ENCODE measurements at regions of chr4 and their contacts with region 1.

Region 1: GRCh38 chr4:17810260-17811077 is at the starts of genes DCAF16 and NCAPG:
- DNase-seq: peak; percentile 99
- H3K4me3 ChIP-seq: peak within 1 kb of the TSS; percentile 59 to 81
- H3K27ac ChIP-seq: peak within 1 kb of the TSS; percentile 89 to 93
- H3K4me1 ChIP-seq: peaks cover 8% of the 10 kb centered on the region
- H3K27me3 ChIP-seq: no peaks in the 10 kb centered on the region
- CTCF ChIP-seq: no peak
- POLR2A ChIP-seq: peak; percentile 98
- total RNA-seq, gene DCAF16: 33.0 to 44.0 TPM
- total RNA-seq, gene NCAPG: 0.96 to 4.7 TPM

Region 2: DNA sequence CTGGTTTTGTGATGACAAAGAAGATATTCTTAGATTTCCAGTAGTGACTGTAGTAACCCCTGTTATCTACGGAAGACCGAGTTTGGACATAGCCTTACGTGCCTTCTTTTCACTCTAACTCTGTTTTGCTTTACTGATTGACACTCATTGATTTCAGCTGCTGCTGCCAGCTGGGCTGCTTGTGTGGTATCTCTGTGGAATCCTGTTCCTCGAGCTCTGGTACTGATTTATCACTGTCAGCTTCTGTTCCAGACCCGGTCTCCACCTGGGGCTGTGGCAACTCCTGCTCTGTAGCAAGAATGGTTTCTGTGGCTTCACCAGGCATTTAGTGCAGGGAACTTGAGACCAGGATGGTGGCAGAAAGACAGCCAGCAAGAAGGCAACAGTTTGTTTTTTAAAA is 258.0 kb before region 1 on chr4:
- intact Hi-C with region 1: loop called (anchors 10 kb)
- DNase-seq: no peak
- H3K4me3 ChIP-seq: no peak overlapping the region
- H3K27ac ChIP-seq: no peak overlapping the region
- H3K4me1 ChIP-seq: no peaks in the 10 kb centered on the region
- H3K27me3 ChIP-seq: no peaks in the 10 kb centered on the region
- CTCF ChIP-seq: no peak
- POLR2A ChIP-seq: no peak

Region 3: DNA sequence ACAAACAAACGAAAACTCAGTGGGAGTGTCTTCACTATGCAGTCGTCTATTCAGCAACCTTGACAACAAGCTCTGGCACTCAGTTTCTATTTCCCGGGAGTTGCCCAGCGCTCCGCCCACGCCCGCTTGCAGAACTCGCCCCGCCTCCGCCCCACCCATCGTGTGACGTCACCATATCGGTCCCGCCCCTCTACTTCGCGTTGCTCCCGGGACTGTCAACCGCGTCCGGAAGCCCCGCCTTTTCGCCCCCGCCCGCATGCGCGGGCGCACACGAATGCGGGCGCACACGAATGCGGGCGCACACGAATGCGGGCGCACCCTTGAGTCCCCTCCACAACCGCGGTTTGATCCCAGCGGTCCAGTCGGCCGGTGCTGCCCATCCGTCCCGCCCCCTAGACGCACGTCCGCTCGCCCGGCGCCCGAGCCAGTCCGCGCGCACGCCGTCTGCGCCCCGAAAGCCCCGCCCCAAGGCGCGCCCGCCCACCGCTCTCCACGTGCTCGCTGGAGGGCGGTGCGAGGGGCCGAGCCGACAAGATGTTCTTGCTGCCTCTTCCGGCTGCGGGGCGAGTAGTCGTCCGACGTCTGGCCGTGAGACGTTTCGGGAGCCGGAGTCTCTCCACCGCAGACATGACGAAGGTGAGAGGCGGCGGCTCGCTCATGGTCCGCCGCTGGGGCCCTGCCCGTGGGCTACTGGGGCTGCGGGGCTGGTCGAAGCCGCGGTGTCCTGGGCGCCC is 233.4 kb before region 1 on chr4 and contains the start of gene LAP3:
- intact Hi-C with region 1: loop called (anchors 5 kb)
- DNase-seq: peak; percentile 98
- H3K4me3 ChIP-seq: peak within 1 kb of the TSS; percentile 53 to 71
- H3K27ac ChIP-seq: peak within 1 kb of the TSS; percentile 84 to 90
- H3K4me1 ChIP-seq: no peaks in the 10 kb centered on the region
- H3K27me3 ChIP-seq: no peaks in the 10 kb centered on the region
- CTCF ChIP-seq: peak in 2 of 4 experiments; percentile 7 to 13
- POLR2A ChIP-seq: peak; percentile 86
- total RNA-seq, gene LAP3: 55.8 to 98.1 TPM

Region 4: GRCh38 chr4:17587094-17587822 is 223.2 kb before region 1 on chr4:
- intact Hi-C with region 1: no loop called
- DNase-seq: no peak
- H3K4me3 ChIP-seq: no peak overlapping the region
- H3K27ac ChIP-seq: no peak overlapping the region
- H3K4me1 ChIP-seq: no peaks in the 10 kb centered on the region
- H3K27me3 ChIP-seq: no peaks in the 10 kb centered on the region
- CTCF ChIP-seq: no peak
- POLR2A ChIP-seq: no peak

Region 5: GRCh38 chr4:17846266-17846665 is 35.8 kb after region 1 on chr4:
- intact Hi-C with region 1: no loop called
- DNase-seq: no peak
- H3K4me3 ChIP-seq: no peak overlapping the region
- H3K27ac ChIP-seq: no peak overlapping the region
- H3K4me1 ChIP-seq: no peaks in the 10 kb centered on the region
- H3K27me3 ChIP-seq: no peaks in the 10 kb centered on the region
- CTCF ChIP-seq: no peak
- POLR2A ChIP-seq: no peak

Region 6: GRCh38 chr4:17866810-17867209 is 56.3 kb after region 1 on chr4:
- intact Hi-C with region 1: no loop called
- DNase-seq: no peak
- H3K4me3 ChIP-seq: no peak overlapping the region
- H3K27ac ChIP-seq: no peak overlapping the region
- H3K4me1 ChIP-seq: no peaks in the 10 kb centered on the region
- H3K27me3 ChIP-seq: no peaks in the 10 kb centered on the region
- CTCF ChIP-seq: no peak
- POLR2A ChIP-seq: no peak

Region 7: GRCh38 chr4:18021722-18022571 is 211.5 kb after region 1 on chr4 and contains the start of gene LCORL:
- intact Hi-C with region 1: loop called (anchors 2 kb)
- DNase-seq: peak; percentile 93
- H3K4me3 ChIP-seq: peak within 1 kb of the TSS; percentile 91 to 96
- H3K27ac ChIP-seq: peak within 1 kb of the TSS; percentile 85 to 93
- H3K4me1 ChIP-seq: no peaks in the 10 kb centered on the region
- H3K27me3 ChIP-seq: no peaks in the 10 kb centered on the region
- CTCF ChIP-seq: peak in 1 of 4 experiments; percentile 25
- POLR2A ChIP-seq: peak; percentile 73
- total RNA-seq, gene LCORL: 17.8 to 34.5 TPM